PC-9 (cell line): ENCODE measurements at regions of chr2 and their contacts with region 1.

Region 1: DNA sequence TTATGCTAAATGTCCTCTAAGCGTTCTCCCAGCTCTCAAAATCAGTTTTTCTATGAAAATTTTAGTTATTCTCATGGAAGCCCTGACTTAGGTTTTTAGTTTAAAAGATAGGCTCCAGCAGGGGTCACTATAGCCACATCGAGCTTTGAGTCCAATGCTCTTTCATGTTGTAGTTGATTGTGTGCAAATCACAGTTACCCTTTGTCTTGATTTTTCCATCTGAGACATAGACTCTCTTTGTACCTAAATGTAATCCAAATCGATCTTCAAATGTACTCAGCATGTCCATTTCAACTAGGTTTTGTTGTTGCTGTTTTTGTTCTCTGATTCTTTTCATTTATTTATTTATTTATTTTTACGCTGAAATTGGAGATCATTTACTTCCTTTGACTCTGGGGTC is 26.4 kb upstream of the MSTN start:
- DNase-seq: peak; percentile 2 to 37
- H3K4me3 ChIP-seq: no peak overlapping the region
- H3K27ac ChIP-seq: no peak overlapping the region
- H3K4me1 ChIP-seq: no peaks in the 10 kb centered on the region
- H3K27me3 ChIP-seq: no peaks in the 10 kb centered on the region
- CTCF ChIP-seq: peak; percentile 77

Region 2: GRCh38 chr2:190043441-190043840 is 45.5 kb before region 1 on chr2:
- CTCF ChIA-PET with region 1: no interaction called
- POLR2A ChIA-PET with region 1: no interaction called
- intact Hi-C with region 1: no loop called
- DNase-seq: no peak
- H3K4me3 ChIP-seq: no peak overlapping the region
- H3K27ac ChIP-seq: no peak overlapping the region
- H3K4me1 ChIP-seq: no peaks in the 10 kb centered on the region
- H3K27me3 ChIP-seq: no peaks in the 10 kb centered on the region
- CTCF ChIP-seq: no peak

Region 3: DNA sequence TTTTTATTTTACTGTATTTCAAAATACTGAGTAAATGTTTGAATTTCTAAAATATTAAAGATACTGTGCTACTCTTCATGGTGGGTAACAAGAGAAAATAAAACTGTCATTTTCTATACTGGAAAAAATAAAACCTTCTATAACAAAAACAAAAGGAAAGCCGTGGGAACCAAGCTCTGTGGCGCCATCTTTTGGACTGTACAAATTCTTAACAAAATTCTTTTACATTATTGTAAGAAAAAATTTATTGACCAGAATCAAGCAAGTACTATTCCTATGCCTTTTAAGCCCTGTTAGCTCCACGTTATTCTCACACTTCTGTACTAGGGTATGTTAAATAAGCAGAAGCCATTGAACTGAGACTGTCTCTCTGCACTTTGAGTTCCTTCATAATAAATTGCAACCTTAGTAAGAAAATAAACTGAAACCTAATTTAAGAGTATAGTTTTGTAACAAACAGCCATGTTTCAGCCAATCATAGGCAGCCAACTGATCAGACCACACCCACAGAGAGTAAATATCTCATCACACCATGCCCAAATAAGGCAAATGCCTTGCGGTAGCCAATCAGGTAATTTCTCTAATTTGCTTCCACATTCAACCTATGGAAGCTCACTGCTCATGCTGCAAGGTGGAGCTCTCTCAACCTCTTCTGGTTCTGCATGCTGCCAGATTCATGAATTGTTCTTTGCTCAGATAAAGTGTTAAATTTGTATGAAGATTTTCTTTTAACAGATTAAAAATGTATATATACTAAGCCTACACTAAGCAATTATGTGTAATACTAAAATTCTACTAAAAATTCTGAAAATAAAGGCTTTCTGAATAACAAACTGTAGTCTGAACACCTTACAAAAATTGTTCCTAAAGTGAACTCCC is 188.6 kb after region 1 on chr2:
- CTCF ChIA-PET with region 1: no interaction called
- POLR2A ChIA-PET with region 1: no interaction called
- intact Hi-C with region 1: loop called (anchors 5 kb)
- DNase-seq: no peak
- H3K4me3 ChIP-seq: no peak overlapping the region
- H3K27ac ChIP-seq: no peak overlapping the region
- H3K4me1 ChIP-seq: no peaks in the 10 kb centered on the region
- H3K27me3 ChIP-seq: no peaks in the 10 kb centered on the region
- CTCF ChIP-seq: no peak; the same call in 1 of the 2 replicates

Region 4: GRCh38 chr2:190319555-190320498 is 230.9 kb after region 1 on chr2 and contains the start of gene HIBCH:
- CTCF ChIA-PET with region 1: no interaction called
- POLR2A ChIA-PET with region 1: no interaction called
- intact Hi-C with region 1: loop called (anchors 5 kb)
- DNase-seq: peak; percentile 94 to 95
- H3K4me3 ChIP-seq: peak within 1 kb of the TSS; percentile 85
- H3K27ac ChIP-seq: peak within 1 kb of the TSS; percentile 55
- H3K4me1 ChIP-seq: peaks cover 9% of the 10 kb centered on the region
- H3K27me3 ChIP-seq: no peaks in the 10 kb centered on the region
- CTCF ChIP-seq: peak; percentile 57
- total RNA-seq, gene HIBCH: 14.7 and 17.4 TPM in 2 replicates

Region 5: GRCh38 chr2:190511104-190511503 is 422.2 kb after region 1 on chr2:
- CTCF ChIA-PET with region 1: no interaction called
- POLR2A ChIA-PET with region 1: no interaction called
- intact Hi-C with region 1: loop called (anchors 5 kb)
- DNase-seq: no peak
- H3K4me3 ChIP-seq: no peak overlapping the region
- H3K27ac ChIP-seq: no peak overlapping the region
- H3K4me1 ChIP-seq: no peaks in the 10 kb centered on the region
- H3K27me3 ChIP-seq: no peaks in the 10 kb centered on the region
- CTCF ChIP-seq: peak; percentile 67

Region 6: GRCh38 chr2:190947711-190948251 is 858.9 kb after region 1 on chr2:
- CTCF ChIA-PET with region 1: no interaction called
- POLR2A ChIA-PET with region 1: no interaction called
- intact Hi-C with region 1: loop called (anchors 5 kb)
- DNase-seq: peak; percentile 35 to 75
- H3K4me3 ChIP-seq: no peak overlapping the region
- H3K27ac ChIP-seq: peak overlapping the region; percentile 46
- H3K4me1 ChIP-seq: peaks cover 33% of the 10 kb centered on the region
- H3K27me3 ChIP-seq: no peaks in the 10 kb centered on the region
- CTCF ChIP-seq: no peak